ENCODE measurements at regions of chr13 and their contacts with region 1.

Region 1: DNA sequence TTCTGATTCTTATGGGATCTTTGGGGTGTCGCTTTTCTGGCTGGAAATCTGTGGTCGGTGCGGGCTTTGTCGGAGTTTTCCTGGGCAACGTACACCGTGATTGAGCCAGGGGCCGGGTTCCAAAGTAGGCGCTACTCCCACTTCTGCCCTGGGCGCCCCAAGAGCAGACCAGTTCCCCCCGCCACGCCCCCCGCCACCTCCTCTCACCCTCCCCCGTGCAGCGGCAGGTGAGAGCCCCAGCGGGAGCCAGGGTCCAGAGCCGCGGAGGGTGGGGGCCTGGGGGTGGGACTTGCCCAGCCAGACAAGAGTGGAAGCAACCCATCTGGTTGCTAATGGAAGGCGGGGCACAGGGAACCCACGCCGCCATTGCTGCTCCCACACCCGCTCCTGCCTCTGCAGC is 2195.9 kb downstream of the PCDH9 start:
- DNase-seq: no peak
- ATAC-seq: no peak
- H3K4me3 ChIP-seq: no peak overlapping the region
- H3K4me3 Mint-ChIP-seq: no peak overlapping the region
- H3K27ac ChIP-seq: no peak overlapping the region
- H3K27ac Mint-ChIP-seq: no peak overlapping the region
- H3K4me1 ChIP-seq: no peaks in the 10 kb centered on the region
- H3K4me1 Mint-ChIP-seq: no peaks in the 10 kb centered on the region
- H3K27me3 ChIP-seq: no peaks in the 10 kb centered on the region
- H3K27me3 Mint-ChIP-seq: no peaks in the 10 kb centered on the region
- CTCF ChIP-seq: no peak

Region 2: DNA sequence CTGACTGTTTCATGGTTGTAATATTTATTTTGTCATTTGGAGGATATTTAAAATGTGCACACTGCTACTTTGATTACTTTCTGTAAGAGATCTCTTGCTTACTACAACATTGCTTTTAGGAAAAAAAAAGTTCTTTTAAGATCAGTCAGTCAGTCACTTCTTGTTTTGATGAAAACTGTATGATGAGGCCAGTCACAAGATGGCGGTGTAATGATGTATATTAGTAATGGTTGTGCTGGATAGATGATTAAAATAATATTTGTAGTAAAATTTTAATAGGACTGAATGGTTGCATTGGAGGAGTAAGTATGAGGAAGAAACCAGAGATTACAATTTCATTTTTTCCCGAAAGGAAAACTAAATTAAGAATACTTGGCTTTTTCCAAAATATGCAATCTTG is 215.2 kb before region 1 on chr13:
- CTCF ChIA-PET with region 1: no interaction called
- POLR2A ChIA-PET with region 1: no interaction called
- intact Hi-C with region 1: no loop called
- DNase-seq: no peak
- ATAC-seq: no peak
- H3K4me3 ChIP-seq: no peak overlapping the region
- H3K4me3 Mint-ChIP-seq: no peak overlapping the region
- H3K27ac ChIP-seq: no peak overlapping the region
- H3K27ac Mint-ChIP-seq: no peak overlapping the region
- H3K4me1 ChIP-seq: no peaks in the 10 kb centered on the region
- H3K4me1 Mint-ChIP-seq: no peaks in the 10 kb centered on the region
- H3K27me3 ChIP-seq: no peaks in the 10 kb centered on the region
- H3K27me3 Mint-ChIP-seq: no peaks in the 10 kb centered on the region
- CTCF ChIP-seq: no peak

Region 3: DNA sequence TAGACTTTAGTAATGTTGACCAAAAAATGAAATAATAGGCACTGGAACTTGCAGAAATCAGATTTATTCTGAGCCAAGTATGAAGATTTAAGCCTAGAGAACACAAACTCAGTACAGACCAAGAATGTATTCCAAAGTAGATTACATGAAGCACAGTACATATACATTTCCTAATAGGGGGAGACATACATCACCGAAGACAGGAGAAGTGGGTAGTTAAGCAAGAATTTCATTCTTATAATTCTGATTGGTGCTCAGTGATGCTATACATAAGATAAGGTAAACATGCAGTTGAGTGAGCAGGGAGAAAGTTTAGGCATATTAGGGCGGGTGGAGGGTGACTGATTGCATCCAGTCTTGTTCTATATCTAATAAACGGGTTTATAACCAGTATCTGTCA is 22.9 kb before region 1 on chr13:
- CTCF ChIA-PET with region 1: no interaction called
- POLR2A ChIA-PET with region 1: no interaction called
- intact Hi-C with region 1: loop called (anchors 1 kb)
- DNase-seq: no peak
- ATAC-seq: no peak
- H3K4me3 ChIP-seq: no peak overlapping the region
- H3K4me3 Mint-ChIP-seq: no peak overlapping the region
- H3K27ac ChIP-seq: no peak overlapping the region
- H3K27ac Mint-ChIP-seq: no peak overlapping the region
- H3K4me1 ChIP-seq: no peaks in the 10 kb centered on the region
- H3K4me1 Mint-ChIP-seq: no peaks in the 10 kb centered on the region
- H3K27me3 ChIP-seq: no peaks in the 10 kb centered on the region
- H3K27me3 Mint-ChIP-seq: no peaks in the 10 kb centered on the region
- CTCF ChIP-seq: no peak

Measured in B cell (primary cell).